HepG2 (cell line): ENCODE measurements at regions of chr2 and their contacts with region 1.

Region 1: DNA sequence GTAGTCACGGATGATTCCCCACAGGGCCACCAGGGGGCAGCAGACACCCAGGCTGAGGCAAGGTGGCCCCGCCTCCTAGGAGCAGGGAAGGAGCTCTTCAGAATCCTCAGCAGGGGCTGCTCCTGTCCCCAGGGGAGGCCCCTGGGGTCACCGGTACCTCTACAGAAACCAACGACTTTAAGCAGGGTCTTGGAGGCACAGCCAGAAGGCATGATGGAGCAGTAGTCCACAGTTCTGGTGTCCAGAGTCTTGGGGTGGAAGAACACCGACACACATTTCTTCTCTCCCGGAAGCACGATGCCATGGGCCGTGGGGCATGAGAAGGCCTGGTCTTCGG is 11.5 kb downstream of the CFAP65 start:
- DNase-seq: peak; percentile 73
- ATAC-seq: peak; percentile 88
- H3K4me3 ChIP-seq: no peak overlapping the region
- H3K27ac ChIP-seq: no peak overlapping the region
- H3K4me1 ChIP-seq: no peaks in the 10 kb centered on the region
- H3K27me3 ChIP-seq: peaks cover 18 to 83% of the 10 kb centered on the region in 2 experiments
- CTCF ChIP-seq: peak; percentile 98
- EP300 ChIP-seq: no peak
- POLR2A ChIP-seq: no peak
- RAD21 ChIP-seq: peak; percentile 95

Region 2: GRCh38 chr2:218756599-218757377 is 273.0 kb before region 1 on chr2:
- CTCF ChIA-PET with region 1: no interaction called
- POLR2A ChIA-PET with region 1: no interaction called
- in situ Hi-C with region 1: no loop called
- intact Hi-C with region 1: no loop called
- DNase-seq: no peak
- ATAC-seq: no peak
- H3K4me3 ChIP-seq: peak overlapping the region in 2 of 3 experiments; percentile 16 to 50; a peak in 1 of 6 replicates
- H3K27ac ChIP-seq: peak overlapping the region; percentile 96
- H3K4me1 ChIP-seq: peaks cover 79% of the 10 kb centered on the region
- H3K27me3 ChIP-seq: no peaks in the 10 kb centered on the region
- CTCF ChIP-seq: peak; percentile 32
- EP300 ChIP-seq: no peak
- POLR2A ChIP-seq: 0 out of 4 replicates have a peak, but pooled peaks of 1 of the 2 experiments have one; percentile 50
- RAD21 ChIP-seq: no peak

Region 3: DNA sequence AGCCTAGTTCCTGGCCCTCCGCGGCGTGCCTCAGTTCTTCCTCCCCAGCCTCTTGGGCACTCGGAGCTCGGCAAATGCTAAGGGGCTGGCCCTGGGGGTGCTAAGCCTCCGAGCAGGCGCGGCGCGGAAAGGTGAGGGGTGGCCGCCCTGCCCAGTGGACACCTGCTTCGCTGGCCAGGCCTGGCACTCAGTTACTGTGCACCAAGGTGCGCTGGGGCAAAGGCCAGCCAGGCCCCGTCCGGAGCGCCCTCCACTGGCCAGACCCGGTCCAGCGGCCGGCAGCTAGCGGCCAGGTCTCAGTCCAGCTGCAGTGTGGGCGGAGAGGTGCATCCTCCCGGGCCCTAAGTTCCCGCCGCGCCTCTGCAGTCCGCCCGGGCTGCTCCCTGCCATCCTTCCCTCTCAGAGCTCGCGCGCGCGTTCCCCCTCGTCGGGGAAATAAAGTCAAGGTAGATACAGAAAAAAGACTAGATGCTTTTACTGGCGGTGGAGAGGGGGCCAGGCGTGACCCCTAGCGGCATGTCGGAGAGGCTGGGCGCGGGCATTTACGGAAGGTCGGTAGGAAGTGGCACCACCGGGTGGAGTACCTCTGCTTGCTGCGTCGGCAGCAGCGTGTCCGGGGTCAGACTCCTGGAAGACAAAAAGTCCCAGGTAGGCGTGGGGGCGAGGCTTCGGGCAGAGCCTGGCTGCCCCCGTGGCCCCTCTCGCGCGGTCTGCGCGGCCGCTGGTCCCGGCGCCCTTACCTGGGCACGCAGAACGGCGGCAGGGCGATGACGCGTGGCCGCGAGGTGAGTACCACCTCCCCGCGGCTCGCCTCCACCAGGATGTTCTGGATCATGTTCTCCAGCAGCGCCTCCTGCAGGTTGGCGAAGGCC is 27.2 kb before region 1 on chr2:
- CTCF ChIA-PET with region 1: interaction called, 4 read pairs
- POLR2A ChIA-PET with region 1: interaction called, 5 read pairs
- in situ Hi-C with region 1: no loop called
- intact Hi-C with region 1: loop called (anchors 2 kb)
- DNase-seq: peak; percentile 54
- ATAC-seq: peak; percentile 75
- H3K4me3 ChIP-seq: peak overlapping the region; percentile 6 to 64 (median 28); a peak in 4 of 6 replicates
- H3K27ac ChIP-seq: no peak overlapping the region
- H3K4me1 ChIP-seq: peaks cover 24% of the 10 kb centered on the region
- H3K27me3 ChIP-seq: peaks cover 40 to 86% of the 10 kb centered on the region in 2 experiments
- CTCF ChIP-seq: peak; percentile 78
- EP300 ChIP-seq: no peak
- POLR2A ChIP-seq: no peak
- RAD21 ChIP-seq: peak; percentile 47

Region 4: DNA sequence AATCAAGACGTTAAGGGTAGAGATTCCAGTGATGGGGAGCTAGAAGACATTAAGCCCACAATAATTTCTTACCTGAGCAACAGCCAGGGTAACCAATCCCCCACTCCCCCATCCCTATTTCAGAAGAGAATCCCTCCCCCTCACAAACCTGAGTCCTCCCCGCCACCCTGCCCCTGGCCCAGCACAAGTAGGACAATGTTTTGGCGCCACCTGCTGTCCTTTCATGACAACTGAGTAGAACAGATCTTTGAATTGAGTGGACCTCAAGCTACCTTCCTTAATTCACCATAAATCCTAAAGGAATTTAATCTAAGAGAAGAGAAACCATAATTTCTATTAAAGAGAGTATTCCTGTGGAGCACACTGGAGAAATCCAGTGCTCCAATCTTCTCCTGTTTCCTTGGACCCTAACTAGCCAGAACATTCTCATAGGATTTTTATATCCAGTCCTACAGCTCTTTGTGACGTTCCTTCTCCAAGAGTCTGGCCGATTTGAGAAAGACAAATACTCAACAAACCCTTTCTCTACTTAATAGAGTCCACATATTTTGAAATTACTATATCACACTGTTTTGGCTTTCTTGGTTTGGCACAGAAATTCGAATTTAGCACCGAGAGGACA is 89.7 kb after region 1 on chr2:
- CTCF ChIA-PET with region 1: interaction called, 27 read pairs
- POLR2A ChIA-PET with region 1: interaction called, 3 read pairs
- in situ Hi-C with region 1: no loop called
- intact Hi-C with region 1: loop called (anchors 1 kb)
- DNase-seq: peak; percentile 62
- ATAC-seq: peak; percentile 61
- H3K4me3 ChIP-seq: no peak overlapping the region
- H3K27ac ChIP-seq: no peak overlapping the region
- H3K4me1 ChIP-seq: peaks cover 69% of the 10 kb centered on the region
- H3K27me3 ChIP-seq: no peaks in the 10 kb centered on the region
- CTCF ChIP-seq: peak; percentile 95
- EP300 ChIP-seq: no peak
- POLR2A ChIP-seq: no peak
- RAD21 ChIP-seq: peak; percentile 87